IMR-90 (cell line): ENCODE measurements at regions of chr1 and their contacts with region 1.

Region 1: GRCh38 chr1:222465211-222466041 is 82.5 kb downstream of the HHIPL2 start:
- DNase-seq: peak; percentile 93
- ATAC-seq: peak; percentile 99
- H3K4me3 ChIP-seq: peak overlapping the region; percentile 32
- H3K27ac ChIP-seq: peak overlapping the region; percentile 91
- H3K4me1 ChIP-seq: peaks cover 2% of the 10 kb centered on the region; the same call in 1 of the 2 replicates
- H3K27me3 ChIP-seq: no peaks in the 10 kb centered on the region
- CTCF ChIP-seq: peak; percentile 99; the same call in 1 of the 2 replicates
- POLR2A ChIP-seq: peak; percentile 66
- RAD21 ChIP-seq: peak; percentile 98

Region 2: DNA sequence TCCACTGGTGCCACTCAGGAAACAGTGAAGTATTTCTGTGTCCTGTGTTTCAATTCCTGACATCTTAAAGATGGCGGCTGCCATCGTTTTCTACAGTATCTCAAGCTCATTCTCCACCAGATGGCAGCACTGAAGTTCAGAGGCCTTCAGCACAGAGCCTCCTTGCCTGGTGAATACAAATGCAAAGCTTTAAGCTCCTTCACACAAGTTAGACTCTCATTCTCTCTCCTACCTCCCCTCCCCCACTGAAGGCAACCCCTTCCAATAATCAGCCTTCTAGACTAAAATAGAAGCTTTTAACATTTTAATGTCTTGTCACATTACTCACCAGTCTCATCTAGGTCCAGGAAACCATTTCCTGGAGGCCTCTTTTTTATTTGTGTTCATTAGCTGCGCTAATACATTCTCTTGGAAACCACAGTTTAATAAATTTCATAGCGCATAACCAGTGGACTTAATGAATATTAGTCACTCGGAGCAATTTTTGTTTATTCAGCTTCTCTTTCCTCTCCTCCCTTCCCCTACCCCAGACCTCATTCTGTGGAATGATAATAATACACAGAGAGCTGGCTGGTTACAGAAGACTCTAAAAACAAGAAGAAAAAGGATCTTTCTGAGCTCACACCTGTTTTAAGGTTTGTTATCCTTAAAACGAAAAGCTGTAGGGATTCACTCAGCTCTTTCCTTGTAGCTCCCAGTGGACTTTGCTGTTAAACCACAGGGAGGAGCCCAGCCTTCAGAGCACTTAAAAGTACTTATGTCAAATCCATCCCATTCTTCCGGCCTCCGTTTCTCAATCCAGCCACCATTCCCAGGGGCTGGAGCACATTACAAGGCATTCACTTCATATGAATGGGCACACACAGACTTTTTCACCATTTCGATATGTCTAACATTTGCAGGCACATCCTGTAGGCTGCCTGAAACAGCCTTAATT is 1201.3 kb before region 1 on chr1:
- CTCF ChIA-PET with region 1: no interaction called
- POLR2A ChIA-PET with region 1: no interaction called
- dilution Hi-C with region 1: no loop called
- in situ Hi-C with region 1: loop called (anchors 25 kb)
- intact Hi-C with region 1: no loop called
- DNase-seq: peak; percentile 89
- ATAC-seq: peak; percentile 81
- H3K4me3 ChIP-seq: no peak overlapping the region
- H3K27ac ChIP-seq: no peak overlapping the region
- H3K4me1 ChIP-seq: peaks cover 2% of the 10 kb centered on the region; the same call in 1 of the 2 replicates
- H3K27me3 ChIP-seq: no peaks in the 10 kb centered on the region
- CTCF ChIP-seq: peak; percentile 68
- POLR2A ChIP-seq: no peak
- RAD21 ChIP-seq: peak; percentile 77

Region 3: DNA sequence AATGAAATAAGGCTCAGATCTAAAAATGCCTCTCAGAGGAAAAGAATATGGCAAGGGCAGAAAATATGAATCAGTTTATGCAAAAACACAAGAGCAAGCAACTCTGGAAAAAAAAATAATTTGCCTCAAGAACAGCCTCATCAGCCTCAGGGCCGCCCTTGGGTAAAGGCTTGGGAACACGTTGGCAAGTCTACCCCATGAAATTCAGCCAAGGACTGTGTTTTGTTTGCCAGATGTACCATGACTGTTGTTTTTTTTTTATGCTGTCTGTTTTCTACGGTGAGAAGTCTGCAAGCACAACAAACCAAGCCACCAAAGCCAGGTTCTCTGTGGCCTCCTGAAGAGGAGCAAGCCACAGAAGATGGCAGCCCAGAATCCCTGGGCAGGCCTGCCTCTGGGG is 64.5 kb after region 1 on chr1:
- CTCF ChIA-PET with region 1: no interaction called
- POLR2A ChIA-PET with region 1: no interaction called
- dilution Hi-C with region 1: no loop called
- in situ Hi-C with region 1: no loop called
- intact Hi-C with region 1: no loop called
- DNase-seq: no peak
- ATAC-seq: no peak
- H3K4me3 ChIP-seq: no peak overlapping the region
- H3K27ac ChIP-seq: no peak overlapping the region
- H3K4me1 ChIP-seq: no peaks in the 10 kb centered on the region
- H3K27me3 ChIP-seq: peaks cover 8% of the 10 kb centered on the region
- CTCF ChIP-seq: no peak
- POLR2A ChIP-seq: no peak
- RAD21 ChIP-seq: no peak

Region 4: GRCh38 chr1:222617367-222617951 is 152.0 kb after region 1 on chr1:
- CTCF ChIA-PET with region 1: interaction called, 3 read pairs
- POLR2A ChIA-PET with region 1: no interaction called
- dilution Hi-C with region 1: no loop called
- in situ Hi-C with region 1: no loop called
- intact Hi-C with region 1: loop called (anchors 1 kb)
- DNase-seq: peak; percentile 98
- ATAC-seq: peak; percentile 95
- H3K4me3 ChIP-seq: peak overlapping the region; percentile 42
- H3K27ac ChIP-seq: peak overlapping the region; percentile 65
- H3K4me1 ChIP-seq: peaks cover 7% of the 10 kb centered on the region
- H3K27me3 ChIP-seq: no peaks in the 10 kb centered on the region
- CTCF ChIP-seq: no peak
- POLR2A ChIP-seq: peak; percentile 64
- RAD21 ChIP-seq: no peak

Region 5: DNA sequence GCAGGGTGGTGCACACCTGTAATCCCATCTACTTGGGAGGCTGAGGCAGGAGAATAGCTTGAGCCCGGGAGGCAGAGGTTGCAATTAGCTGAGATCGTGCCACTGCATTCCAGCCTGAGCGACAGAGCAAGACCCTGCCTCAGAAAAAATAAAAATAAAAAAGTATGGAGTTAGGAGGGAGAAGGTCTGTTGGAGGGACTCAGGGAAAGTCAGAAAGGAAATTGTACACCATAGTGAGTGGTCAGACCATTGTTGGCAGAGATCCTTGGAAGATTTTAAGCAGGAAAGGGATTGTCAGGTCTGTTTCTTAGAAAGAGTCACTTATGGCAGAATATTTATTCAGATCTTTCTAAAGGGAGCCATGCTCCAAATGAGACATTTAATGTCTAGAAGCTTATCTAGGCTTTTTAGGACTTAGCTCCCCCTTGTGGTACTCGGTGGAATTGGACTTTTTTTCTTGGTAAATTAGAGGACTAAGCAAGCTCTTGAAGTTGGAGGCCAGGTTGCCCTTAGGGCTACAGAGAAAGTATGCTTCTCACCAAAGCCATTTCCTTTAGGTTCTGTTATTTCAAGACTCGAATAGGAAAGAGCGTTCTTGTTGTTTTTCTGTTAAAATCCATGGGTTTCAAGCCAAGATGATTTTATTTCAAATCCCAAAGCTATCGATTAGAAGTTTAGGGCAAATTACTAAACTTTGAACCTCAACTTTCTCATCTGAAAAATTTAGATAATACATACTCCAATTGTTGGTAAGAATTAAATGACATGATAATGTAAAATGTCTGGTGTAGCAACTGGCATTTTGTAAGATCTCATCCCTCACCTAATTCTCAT is 169.0 kb after region 1 on chr1:
- CTCF ChIA-PET with region 1: interaction called, 16 read pairs
- POLR2A ChIA-PET with region 1: interaction called, 3 read pairs
- dilution Hi-C with region 1: no loop called
- in situ Hi-C with region 1: loop called (anchors 5 kb)
- intact Hi-C with region 1: loop called (anchors 1 kb)
- DNase-seq: peak; percentile 90
- ATAC-seq: peak; percentile 82
- H3K4me3 ChIP-seq: no peak overlapping the region
- H3K27ac ChIP-seq: no peak overlapping the region
- H3K4me1 ChIP-seq: peaks cover 7% of the 10 kb centered on the region; the same call in 1 of the 2 replicates
- H3K27me3 ChIP-seq: no peaks in the 10 kb centered on the region
- CTCF ChIP-seq: peak; percentile 90
- POLR2A ChIP-seq: no peak
- RAD21 ChIP-seq: peak; percentile 83

Region 6: DNA sequence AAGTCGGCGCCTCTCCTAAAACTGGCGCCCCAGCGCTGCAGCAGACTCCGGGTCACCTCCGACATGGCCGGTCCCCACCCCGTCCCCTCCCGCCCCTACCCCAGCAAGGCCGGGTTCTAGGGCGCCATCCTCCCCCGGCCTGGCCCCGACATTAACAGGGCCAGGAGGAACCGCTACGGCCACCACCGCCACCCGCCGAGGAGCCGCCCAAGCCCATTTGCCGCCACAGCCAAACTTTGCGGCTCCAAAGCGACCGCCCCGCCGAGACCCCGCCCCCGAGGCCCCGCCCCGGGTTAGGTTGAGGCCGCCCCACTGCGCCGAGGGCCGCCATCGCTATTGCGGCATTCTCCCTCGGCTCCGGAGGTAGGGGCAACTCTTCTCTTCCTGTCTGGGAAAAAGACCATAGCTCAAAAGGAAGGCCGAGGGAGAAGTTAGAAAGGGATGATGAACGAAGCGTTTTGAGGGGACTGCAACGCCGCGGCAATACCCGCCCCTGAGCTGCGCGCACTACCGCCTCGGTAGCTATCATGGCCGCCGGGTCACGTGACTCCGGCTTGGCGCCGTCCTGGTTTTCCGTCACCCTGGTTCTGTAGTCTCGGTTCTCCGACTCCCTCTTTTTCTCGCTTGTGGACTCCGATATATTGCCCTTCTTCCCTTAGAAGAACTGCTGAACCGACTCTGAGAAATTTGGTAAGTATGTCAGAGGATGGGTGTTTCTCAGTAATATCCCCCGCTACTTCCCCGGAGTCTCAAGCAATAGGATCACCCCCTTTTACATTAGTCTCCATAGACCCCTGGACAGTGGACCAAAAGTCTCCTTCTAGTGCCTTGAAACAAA is 247.0 kb after region 1 on chr1 and contains the starts of genes AIDA and BROX:
- CTCF ChIA-PET with region 1: no interaction called
- POLR2A ChIA-PET with region 1: no interaction called
- dilution Hi-C with region 1: no loop called
- in situ Hi-C with region 1: no loop called
- intact Hi-C with region 1: loop called (anchors 1 kb)
- DNase-seq: peak; percentile 76
- ATAC-seq: peak; percentile 88
- H3K4me3 ChIP-seq: peak within 1 kb of the TSS; percentile 92
- H3K27ac ChIP-seq: peak within 1 kb of the TSS; percentile 100
- H3K4me1 ChIP-seq: no peaks in the 10 kb centered on the region
- H3K27me3 ChIP-seq: no peaks in the 10 kb centered on the region
- CTCF ChIP-seq: no peak
- POLR2A ChIP-seq: peak; percentile 52; the same call in 1 of the 2 replicates
- RAD21 ChIP-seq: no peak
- total RNA-seq, gene AIDA: 47.9 and 71.4 TPM in 2 replicates
- total RNA-seq, gene BROX: 43.4 and 63.9 TPM in 2 replicates